ENCODE measurements at regions of chr20 and their contacts with region 1.

Region 1: GRCh38 chr20:5001174-5002076 is at the start of gene SLC23A2:
- DNase-seq: peak; percentile 51
- H3K4me3 Mint-ChIP-seq: peak within 1 kb of the TSS; percentile 97
- H3K27ac Mint-ChIP-seq: peak within 1 kb of the TSS; percentile 97
- H3K4me1 Mint-ChIP-seq: peaks cover 29% of the 10 kb centered on the region
- H3K27me3 Mint-ChIP-seq: peaks cover 7% of the 10 kb centered on the region
- total RNA-seq, gene SLC23A2: 28.5 and 31.5 TPM in 2 replicates

Region 2: DNA sequence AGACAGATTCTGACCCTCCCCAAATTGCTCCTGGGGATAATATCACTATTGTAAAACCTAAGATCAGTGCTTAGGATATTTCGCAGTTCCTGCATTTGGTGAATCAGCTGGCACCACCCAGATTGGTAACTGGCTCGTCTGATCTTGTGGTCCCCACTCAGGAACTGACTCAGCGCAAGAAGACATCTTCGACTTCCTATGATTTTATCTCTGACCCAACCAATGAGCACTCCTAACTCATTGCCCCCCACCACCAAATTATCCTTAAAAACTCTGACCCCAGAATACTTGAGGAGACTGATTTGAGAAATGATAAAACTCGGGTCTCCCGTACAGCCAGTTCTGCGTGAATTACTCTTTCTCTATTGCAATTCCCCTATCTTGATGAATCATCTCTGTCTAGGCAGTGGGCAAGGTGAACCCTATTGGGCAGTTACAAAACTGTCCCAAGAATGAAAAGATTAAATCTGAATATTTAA is 335.4 kb before region 1 on chr20:
- intact Hi-C with region 1: no loop called
- DNase-seq: peak; percentile 44
- H3K4me3 Mint-ChIP-seq: peak overlapping the region; percentile 48
- H3K27ac Mint-ChIP-seq: peak overlapping the region; percentile 69
- H3K4me1 Mint-ChIP-seq: peaks cover 38% of the 10 kb centered on the region
- H3K27me3 Mint-ChIP-seq: peaks cover under 1% of the 10 kb centered on the region

Region 3: DNA sequence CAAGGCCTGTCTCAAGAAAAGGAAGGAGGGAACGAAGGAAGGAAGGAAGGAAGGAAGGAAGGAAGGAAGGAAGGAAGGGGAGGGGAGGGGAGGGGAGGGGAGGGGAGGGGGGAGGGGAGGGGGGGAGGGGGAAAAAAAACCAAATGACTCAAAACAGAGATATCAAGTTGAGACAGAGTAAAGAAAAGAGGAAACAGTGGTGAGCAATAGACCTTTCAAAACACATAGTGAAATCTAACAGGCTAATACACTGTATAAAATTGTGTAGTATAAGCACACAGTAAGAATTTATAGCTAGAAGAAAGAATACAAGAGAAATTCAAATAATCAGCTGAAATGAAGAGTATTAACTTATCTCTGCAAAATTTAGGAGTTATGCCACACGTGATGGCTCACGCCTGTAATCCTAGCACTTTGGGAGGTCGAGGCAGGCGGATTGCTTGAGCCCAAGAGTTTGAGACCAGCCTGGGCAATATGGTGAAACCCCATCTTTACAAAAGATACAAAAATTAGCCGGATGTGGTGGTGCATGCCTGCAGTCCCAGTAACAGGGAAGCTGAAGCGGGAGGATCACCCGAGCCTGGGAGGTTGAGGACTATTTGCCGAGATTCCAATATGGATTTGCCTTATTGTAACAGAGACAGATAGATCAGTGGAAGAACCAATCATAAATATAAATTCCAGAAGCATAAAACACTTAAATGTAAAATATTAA is 156.5 kb before region 1 on chr20:
- intact Hi-C with region 1: no loop called
- DNase-seq: no peak
- H3K4me3 Mint-ChIP-seq: no peak overlapping the region
- H3K27ac Mint-ChIP-seq: no peak overlapping the region
- H3K4me1 Mint-ChIP-seq: peaks cover 7% of the 10 kb centered on the region
- H3K27me3 Mint-ChIP-seq: peaks cover 15% of the 10 kb centered on the region

Region 4: GRCh38 chr20:4949833-4950178 is 51.6 kb before region 1 on chr20:
- intact Hi-C with region 1: no loop called
- DNase-seq: no peak
- H3K4me3 Mint-ChIP-seq: peak overlapping the region; percentile 16
- H3K27ac Mint-ChIP-seq: peak overlapping the region; percentile 40
- H3K4me1 Mint-ChIP-seq: peaks cover 39% of the 10 kb centered on the region
- H3K27me3 Mint-ChIP-seq: peaks cover 2% of the 10 kb centered on the region

Region 5: DNA sequence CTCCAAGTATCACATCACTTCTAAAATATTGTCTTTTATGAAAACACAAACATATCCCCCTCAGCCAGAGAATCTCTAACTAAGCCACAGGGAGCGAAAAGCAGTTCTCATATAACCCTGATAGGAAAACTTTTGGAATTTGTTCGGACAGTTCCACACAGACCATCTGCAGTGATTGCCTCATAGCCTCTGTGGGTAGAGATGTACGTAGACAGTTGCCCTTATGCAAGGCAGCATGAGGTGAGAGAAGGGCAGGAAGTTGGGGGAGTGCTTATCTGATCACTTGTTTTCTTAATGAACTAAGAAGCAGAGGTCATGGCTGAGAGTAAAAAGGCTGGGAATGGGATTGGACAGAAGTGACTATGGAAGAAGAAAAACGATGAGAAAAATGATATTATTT is 39.7 kb before region 1 on chr20:
- intact Hi-C with region 1: loop called (anchors 5 kb)
- DNase-seq: peak; percentile 14
- H3K4me3 Mint-ChIP-seq: peak overlapping the region; percentile 67
- H3K27ac Mint-ChIP-seq: peak overlapping the region; percentile 94
- H3K4me1 Mint-ChIP-seq: peaks cover 29% of the 10 kb centered on the region
- H3K27me3 Mint-ChIP-seq: no peaks in the 10 kb centered on the region

Region 6: GRCh38 chr20:4989570-4989969 is 11.9 kb before region 1 on chr20:
- intact Hi-C with region 1: loop called (anchors 1 kb)
- DNase-seq: no peak
- H3K4me3 Mint-ChIP-seq: peak overlapping the region; percentile 60
- H3K27ac Mint-ChIP-seq: peak overlapping the region; percentile 88
- H3K4me1 Mint-ChIP-seq: peaks cover 19% of the 10 kb centered on the region
- H3K27me3 Mint-ChIP-seq: no peaks in the 10 kb centered on the region

Region 7: DNA sequence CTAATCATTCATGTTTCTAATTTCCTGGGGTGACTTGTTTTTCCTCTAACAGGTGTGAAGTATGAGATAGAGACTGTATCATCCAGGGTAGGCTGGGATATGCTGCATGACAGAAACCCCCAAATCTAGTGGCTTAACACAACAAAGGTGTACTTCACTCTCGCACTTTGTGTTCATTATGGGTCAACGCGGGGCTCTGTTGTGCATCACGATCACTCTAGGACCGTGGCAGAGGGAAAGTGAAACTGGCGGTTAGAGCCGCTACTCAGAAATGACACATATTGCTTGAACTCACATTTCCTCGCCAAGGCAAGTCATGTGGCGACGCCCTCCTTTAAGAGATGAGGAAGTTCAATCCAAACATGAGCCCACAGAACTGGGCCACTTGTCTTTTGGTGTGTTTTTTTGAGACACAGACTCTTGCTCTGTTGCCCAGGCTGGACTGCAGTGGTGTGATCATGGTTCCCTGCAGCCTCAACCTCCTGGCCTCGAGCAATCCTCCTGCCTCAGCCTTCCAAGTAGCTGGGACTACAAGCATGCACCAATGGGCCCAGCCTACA is 77.1 kb after region 1 on chr20:
- intact Hi-C with region 1: loop called (anchors 2 kb)
- DNase-seq: peak; percentile 81
- H3K4me3 Mint-ChIP-seq: peak overlapping the region; percentile 63
- H3K27ac Mint-ChIP-seq: peak overlapping the region; percentile 89
- H3K4me1 Mint-ChIP-seq: peaks cover 56% of the 10 kb centered on the region
- H3K27me3 Mint-ChIP-seq: no peaks in the 10 kb centered on the region

Region 8: GRCh38 chr20:5100684-5101347 is 99.4 kb after region 1 on chr20:
- intact Hi-C with region 1: loop called (anchors 2 kb)
- DNase-seq: peak; percentile 49
- H3K4me3 Mint-ChIP-seq: no peak overlapping the region
- H3K27ac Mint-ChIP-seq: no peak overlapping the region
- H3K4me1 Mint-ChIP-seq: peaks cover 9% of the 10 kb centered on the region
- H3K27me3 Mint-ChIP-seq: no peaks in the 10 kb centered on the region

Measured in activated T-helper 1 cell treated with anti-CD3 and anti-CD28 coated beads, Interleukin-12 subunit alpha, Interleukin-12 subunit beta, Interleukin-2, Interleukin-4 antibody, amounts not matched to agents 30 ng/mL and 10 ng/mL and 1 ng/mL, durations not matched to agents 14 hours and 24 hours and 36 hours (primary cell).